ENCODE measurements at regions of chr11 and their contacts with region 1.

Region 1: DNA sequence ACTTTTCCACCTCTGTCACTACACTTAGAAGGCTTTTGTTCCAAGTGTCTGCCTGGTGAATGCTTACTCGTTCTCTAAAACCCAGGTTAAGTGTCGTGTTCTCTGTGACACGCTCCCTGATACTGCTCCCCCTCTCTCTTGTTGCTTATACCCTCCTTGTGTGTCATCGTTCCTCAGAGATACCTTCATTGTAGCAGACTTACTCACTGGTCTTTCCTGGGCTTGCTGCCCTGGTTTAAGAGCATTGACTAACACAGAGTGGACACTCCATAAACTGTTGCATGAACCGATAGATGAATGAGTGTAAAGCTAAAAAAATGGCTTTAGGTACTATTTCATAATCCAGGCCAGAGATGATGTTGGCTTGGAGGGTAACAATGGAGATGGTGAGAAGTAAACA is 171.3 kb downstream of the GRIK4 start:
- DNase-seq: no peak
- ATAC-seq: no peak
- H3K4me3 Mint-ChIP-seq: no peak overlapping the region
- H3K27ac Mint-ChIP-seq: no peak overlapping the region
- H3K4me1 Mint-ChIP-seq: no peaks in the 10 kb centered on the region
- H3K27me3 Mint-ChIP-seq: peaks cover 9% of the 10 kb centered on the region
- CTCF ChIP-seq: no peak

Region 2: DNA sequence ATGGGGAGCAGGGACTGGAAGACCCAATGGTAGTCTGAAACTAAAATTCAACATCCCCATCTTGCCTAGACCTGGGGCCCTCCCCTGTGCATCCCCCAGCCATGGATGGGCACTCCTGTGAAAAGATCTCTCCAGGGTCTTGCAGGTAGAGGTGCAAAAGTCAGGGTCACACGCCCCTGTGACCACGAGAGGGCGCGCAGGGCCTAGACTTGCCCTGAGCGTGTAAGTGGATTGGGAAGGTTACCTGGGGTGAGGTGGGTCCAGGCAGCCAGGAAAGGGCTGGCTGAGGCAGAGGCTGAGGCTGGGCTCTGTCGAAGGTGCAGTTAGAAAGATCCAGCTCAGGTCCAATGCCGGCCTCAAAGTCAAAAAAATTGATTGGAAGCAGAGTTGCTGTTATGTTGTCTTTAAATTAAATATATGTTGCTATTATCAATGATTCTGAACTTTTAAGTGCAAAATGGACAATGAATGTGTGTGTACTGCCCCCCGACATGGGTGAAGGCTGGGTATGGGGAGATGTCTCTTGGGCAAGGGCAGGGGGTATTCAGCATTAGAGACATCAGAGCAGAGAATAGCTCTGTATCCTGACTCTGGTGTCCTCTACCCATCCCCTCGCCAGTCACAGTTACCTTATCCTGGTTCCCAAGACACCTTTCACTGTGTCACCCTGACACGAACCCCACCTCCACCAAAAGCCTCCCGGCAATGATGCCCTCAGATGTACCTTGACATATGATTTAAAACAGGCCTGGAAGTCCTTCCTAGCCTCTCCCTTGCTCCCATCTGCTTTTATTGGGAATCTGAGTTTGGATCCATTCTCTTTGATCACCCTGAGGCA is 447.6 kb before region 1 on chr11:
- CTCF ChIA-PET with region 1: no interaction called
- POLR2A ChIA-PET with region 1: no interaction called
- intact Hi-C with region 1: loop called (anchors 2 kb)
- DNase-seq: peak; percentile 34
- ATAC-seq: peak; percentile 40
- H3K4me3 Mint-ChIP-seq: no peak overlapping the region
- H3K27ac Mint-ChIP-seq: no peak overlapping the region
- H3K4me1 Mint-ChIP-seq: peaks cover under 1% of the 10 kb centered on the region
- H3K27me3 Mint-ChIP-seq: peaks cover 35% of the 10 kb centered on the region
- CTCF ChIP-seq: no peak

Region 3: DNA sequence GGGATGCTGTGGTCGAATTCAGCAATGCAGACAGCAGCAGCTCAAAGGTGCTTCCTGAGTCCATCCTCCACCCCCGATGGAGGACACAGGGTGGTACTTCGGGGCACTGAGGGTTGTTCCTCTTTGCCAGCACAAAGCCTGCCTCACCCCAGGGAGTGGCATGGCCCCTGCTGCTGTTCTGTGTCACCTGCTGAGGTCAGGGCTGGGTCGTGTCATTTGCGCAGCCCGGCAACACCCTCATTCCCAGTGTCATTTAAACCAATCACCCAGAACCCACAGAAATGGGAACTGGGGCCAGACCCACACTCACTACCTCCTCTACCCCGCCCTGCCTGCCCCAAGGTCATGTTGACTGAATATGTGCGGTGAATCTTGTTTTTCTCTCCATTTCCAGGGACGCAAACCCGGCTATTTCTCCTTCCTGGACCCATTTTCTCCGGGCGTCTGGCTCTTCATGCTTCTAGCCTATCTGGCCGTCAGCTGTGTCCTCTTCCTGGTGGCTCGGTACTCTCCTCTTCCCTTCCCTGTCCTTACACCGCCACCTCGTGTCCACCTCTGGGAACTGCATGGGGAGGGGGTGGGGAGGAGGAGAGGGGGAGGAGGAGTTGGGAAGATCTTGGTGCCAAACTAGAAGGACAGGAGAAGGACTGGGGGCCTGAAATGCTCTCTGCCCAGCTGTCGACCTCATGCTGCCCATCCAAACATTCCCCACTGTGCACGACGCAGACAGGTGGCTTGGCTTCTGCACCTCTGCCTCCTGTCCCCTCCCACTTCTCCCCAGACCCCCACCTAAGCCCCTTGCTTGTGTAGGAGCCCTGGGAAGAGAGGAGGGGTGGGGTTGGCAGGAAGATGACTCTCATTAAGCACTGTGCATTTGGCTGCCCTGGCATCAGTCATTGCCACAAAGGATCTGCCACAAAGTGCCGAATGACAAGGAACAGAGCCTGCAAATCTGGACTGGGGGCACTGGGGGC is 269.9 kb after region 1 on chr11:
- CTCF ChIA-PET with region 1: interaction called, 5 read pairs
- POLR2A ChIA-PET with region 1: no interaction called
- intact Hi-C with region 1: loop called (anchors 1 kb)
- DNase-seq: peak; percentile 26
- ATAC-seq: peak; percentile 75
- H3K4me3 Mint-ChIP-seq: peak overlapping the region; percentile 45
- H3K27ac Mint-ChIP-seq: no peak overlapping the region
- H3K4me1 Mint-ChIP-seq: peaks cover 12% of the 10 kb centered on the region
- H3K27me3 Mint-ChIP-seq: peaks cover 26% of the 10 kb centered on the region
- CTCF ChIP-seq: no peak

Region 4: DNA sequence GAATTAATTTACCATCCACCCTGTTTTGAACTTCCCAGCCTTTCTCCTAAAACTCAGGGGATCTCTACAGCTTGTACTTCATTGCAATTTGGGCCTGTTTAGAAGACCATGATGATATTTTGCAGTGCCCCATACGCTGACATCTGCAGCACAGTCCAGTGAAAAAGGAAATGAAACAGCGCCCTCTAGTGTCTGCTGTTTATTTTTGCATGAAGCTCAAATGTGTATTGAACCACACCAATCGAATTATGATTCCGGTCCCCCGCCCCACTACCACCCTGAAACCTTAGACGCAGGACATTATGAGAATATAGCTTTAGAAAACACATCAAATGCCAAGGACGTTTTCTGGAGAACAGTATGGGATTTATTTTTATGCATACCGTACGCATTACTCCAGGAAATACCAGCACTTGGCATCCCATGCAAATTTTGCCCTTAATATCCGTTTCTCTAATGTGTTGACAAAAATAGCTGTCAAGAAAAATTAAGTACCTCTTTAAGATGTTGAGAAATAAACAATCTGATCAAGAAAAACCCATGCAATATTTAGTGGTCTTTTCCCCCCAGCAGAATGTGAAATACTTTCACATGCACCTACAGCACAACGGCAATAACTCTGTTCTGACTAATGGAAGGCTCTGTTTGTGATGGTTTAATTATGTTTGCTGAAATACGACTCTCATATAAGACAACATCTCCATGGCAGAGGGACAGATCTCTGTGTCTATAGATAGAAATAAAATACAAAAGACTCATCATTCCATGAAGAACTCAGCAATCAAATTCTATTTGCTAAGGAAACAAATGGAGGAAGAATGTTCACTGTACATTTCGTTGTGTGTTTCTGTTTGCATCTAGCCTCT is 512.1 kb after region 1 on chr11:
- CTCF ChIA-PET with region 1: interaction called, 5 read pairs
- POLR2A ChIA-PET with region 1: no interaction called
- intact Hi-C with region 1: loop called (anchors 1 kb)
- DNase-seq: no peak
- ATAC-seq: peak; percentile 52
- H3K4me3 Mint-ChIP-seq: no peak overlapping the region
- H3K27ac Mint-ChIP-seq: no peak overlapping the region
- H3K4me1 Mint-ChIP-seq: peaks cover 6% of the 10 kb centered on the region
- H3K27me3 Mint-ChIP-seq: peaks cover 25% of the 10 kb centered on the region
- CTCF ChIP-seq: no peak

Measured in activated B cell treated with CpG ODN at 0.5 μM for 24 hours (primary cell).